ENCODE measurements at regions of chr1 and their contacts with region 1.

Region 1: DNA sequence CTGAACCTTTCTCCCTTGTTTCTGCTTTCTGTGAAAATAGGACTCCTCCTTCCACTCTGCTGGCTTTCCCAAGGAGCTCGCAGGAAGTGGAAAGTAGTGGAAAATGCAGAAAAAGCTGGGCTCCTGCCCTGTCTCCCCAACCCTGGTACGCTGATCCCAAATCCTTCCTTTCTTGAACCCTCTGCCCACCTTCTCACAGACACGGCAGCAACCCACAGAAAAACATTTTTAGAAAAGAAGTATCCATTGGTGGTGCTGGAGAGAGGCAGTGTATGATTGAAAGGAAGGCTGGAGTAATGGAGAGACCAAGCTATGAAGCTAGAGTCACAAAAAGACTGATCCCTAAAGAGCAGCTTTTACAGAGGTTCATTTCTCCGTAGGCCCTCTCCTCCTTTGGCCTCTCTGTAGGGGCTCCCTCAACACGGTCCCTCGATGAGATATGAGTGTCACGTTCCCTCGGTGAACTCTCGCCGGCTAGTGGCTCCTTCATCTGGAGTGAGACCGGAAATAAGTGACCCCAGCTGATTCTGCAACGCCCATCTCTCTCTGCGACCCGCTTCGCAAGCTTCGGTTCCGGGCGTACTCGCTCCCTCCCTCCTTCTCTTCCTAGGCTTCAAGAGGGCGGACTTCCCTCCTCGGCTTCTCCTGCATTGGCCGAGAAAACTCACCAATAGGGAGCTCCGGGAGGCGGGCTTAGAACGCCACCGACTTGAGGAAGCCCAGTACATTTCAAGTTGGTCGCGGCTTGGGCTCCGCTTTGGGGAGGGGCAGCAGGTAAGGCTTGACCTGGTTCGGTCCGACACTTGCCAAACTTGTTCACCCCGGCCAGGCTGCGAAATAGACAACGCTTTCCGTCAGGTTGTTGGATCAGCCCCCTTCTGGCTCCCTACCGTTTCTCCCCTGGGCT is at the starts of genes ANKRD34A and POLR3GL:
- DNase-seq: peak; percentile 88 to 97 (median 90)
- H3K4me3 ChIP-seq: peak within 1 kb of the TSS; percentile 65 to 94
- H3K4me3 Mint-ChIP-seq: peak within 1 kb of the TSS; percentile 89 to 95 (median 93)
- H3K27ac ChIP-seq: peak within 1 kb of the TSS; percentile 71
- H3K27ac Mint-ChIP-seq: peak within 1 kb of the TSS; percentile 89 to 99 (median 98)
- H3K4me1 ChIP-seq: peaks cover 62% of the 10 kb centered on the region
- H3K4me1 Mint-ChIP-seq: peaks cover 32 to 72% (median 45%) of the 10 kb centered on the region in 4 donors
- H3K27me3 ChIP-seq: no peaks in the 10 kb centered on the region
- H3K27me3 Mint-ChIP-seq: no peaks in the 10 kb centered on the region
- total RNA-seq, gene ANKRD34A: 1.8 to 2.1 TPM
- total RNA-seq, gene POLR3GL: 36.6 to 38.3 TPM

Region 2: GRCh38 chr1:145720877-145721671 is 243.2 kb before region 1 on chr1:
- CTCF ChIA-PET with region 1: no interaction called
- POLR2A ChIA-PET with region 1: no interaction called
- intact Hi-C with region 1: no loop called
- DNase-seq: peak; percentile 46 to 69 (median 55)
- H3K4me3 ChIP-seq: peak overlapping the region in 1 of 2 donors; percentile 21
- H3K4me3 Mint-ChIP-seq: peak overlapping the region; percentile 43 to 82 (median 66)
- H3K27ac ChIP-seq: no peak overlapping the region
- H3K27ac Mint-ChIP-seq: peak overlapping the region in 3 of 7 donors; percentile 18 to 65 (median 55)
- H3K4me1 ChIP-seq: peaks cover 8% of the 10 kb centered on the region
- H3K4me1 Mint-ChIP-seq: peaks cover 6 to 17% (median 14%) of the 10 kb centered on the region in 4 donors
- H3K27me3 ChIP-seq: no peaks in the 10 kb centered on the region
- H3K27me3 Mint-ChIP-seq: peaks cover 7 to 13% of the 10 kb centered on the region in 2 donors

Region 3: GRCh38 chr1:145823565-145824498 is 140.4 kb before region 1 on chr1 and contains the starts of genes POLR3C and RNF115:
- CTCF ChIA-PET with region 1: no interaction called
- POLR2A ChIA-PET with region 1: interaction called, 10 read pairs
- intact Hi-C with region 1: no loop called
- DNase-seq: peak; percentile 84 to 92 (median 86)
- H3K4me3 ChIP-seq: peak within 1 kb of the TSS; percentile 93 to 100
- H3K4me3 Mint-ChIP-seq: peak within 1 kb of the TSS; percentile 97 to 99 (median 98)
- H3K27ac ChIP-seq: peak within 1 kb of the TSS; percentile 78
- H3K27ac Mint-ChIP-seq: peak within 1 kb of the TSS; percentile 90 to 99 (median 97)
- H3K4me1 ChIP-seq: peaks cover 23% of the 10 kb centered on the region
- H3K4me1 Mint-ChIP-seq: peaks cover 17 to 35% (median 24%) of the 10 kb centered on the region in 4 donors
- H3K27me3 ChIP-seq: no peaks in the 10 kb centered on the region
- H3K27me3 Mint-ChIP-seq: no peaks in the 10 kb centered on the region
- total RNA-seq, gene POLR3C: 43.5 to 44.8 TPM
- total RNA-seq, gene RNF115: 15.2 to 15.3 TPM

Region 4: DNA sequence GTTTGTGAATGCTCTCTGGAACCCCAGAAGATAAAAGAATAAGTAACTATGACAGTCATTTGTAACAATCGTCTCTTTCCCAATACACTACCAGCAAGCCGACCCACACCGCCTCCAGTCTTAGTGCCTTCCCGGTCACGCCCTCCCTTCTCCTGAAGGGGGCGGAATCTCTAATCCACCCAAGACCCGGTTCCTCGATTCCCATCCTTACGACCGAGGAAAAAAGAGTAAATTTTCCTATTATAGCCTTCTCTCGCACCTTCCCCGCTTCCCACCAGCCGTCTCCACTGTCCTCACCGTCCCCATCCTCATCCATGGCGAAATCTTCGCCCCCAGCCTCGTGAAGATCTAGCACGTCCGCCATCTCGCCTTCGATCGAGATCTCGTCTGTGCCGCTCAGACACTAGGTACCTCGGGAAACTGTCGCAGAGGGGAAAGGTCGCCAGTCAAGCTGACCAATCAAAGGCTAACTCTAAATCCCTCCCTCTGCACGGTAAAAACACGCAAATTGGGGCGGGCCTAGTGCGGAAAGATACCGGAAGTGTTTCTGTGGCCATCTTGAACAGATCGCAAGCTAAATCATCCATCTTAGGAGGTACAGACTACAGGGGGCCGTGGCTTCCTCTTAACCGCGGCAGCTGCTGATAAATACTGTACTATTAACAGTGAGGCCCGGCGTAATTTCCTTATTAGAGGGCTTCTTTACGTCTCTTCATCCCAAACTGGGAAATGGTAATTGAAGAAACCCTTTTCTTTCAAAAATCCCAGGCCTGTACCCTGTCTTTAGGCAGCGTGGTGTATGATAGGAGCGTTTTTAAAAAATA is 37.0 kb before region 1 on chr1 and contains the start of gene RBM8A:
- CTCF ChIA-PET with region 1: interaction called, 30 read pairs
- POLR2A ChIA-PET with region 1: interaction called, 444 read pairs
- intact Hi-C with region 1: loop called (anchors 1 kb)
- DNase-seq: peak; percentile 94 to 98 (median 97)
- H3K4me3 ChIP-seq: peak within 1 kb of the TSS; percentile 96 to 99
- H3K4me3 Mint-ChIP-seq: peak within 1 kb of the TSS in 5 of 8 donors; percentile 20 to 69 (median 42)
- H3K27ac ChIP-seq: peak within 1 kb of the TSS; percentile 96
- H3K27ac Mint-ChIP-seq: peak within 1 kb of the TSS in 4 of 7 donors; percentile 72 to 94 (median 82)
- H3K4me1 ChIP-seq: peaks cover 29% of the 10 kb centered on the region
- H3K4me1 Mint-ChIP-seq: peaks cover 10 to 25% (median 17%) of the 10 kb centered on the region in 4 donors
- H3K27me3 ChIP-seq: no peaks in the 10 kb centered on the region
- H3K27me3 Mint-ChIP-seq: no peaks in the 10 kb centered on the region
- total RNA-seq, gene RBM8A: 116 to 122 TPM

Region 5: GRCh38 chr1:145996433-145997015 is 32.3 kb after region 1 on chr1 and contains the start of gene TXNIP:
- CTCF ChIA-PET with region 1: interaction called, 5 read pairs
- POLR2A ChIA-PET with region 1: interaction called, 370 read pairs
- intact Hi-C with region 1: loop called (anchors 5 kb)
- DNase-seq: peak; percentile 90 to 96 (median 94)
- H3K4me3 ChIP-seq: peak within 1 kb of the TSS; percentile 97 to 99
- H3K4me3 Mint-ChIP-seq: peak within 1 kb of the TSS; percentile 96 to 99 (median 98)
- H3K27ac ChIP-seq: peak within 1 kb of the TSS; percentile 75
- H3K27ac Mint-ChIP-seq: peak within 1 kb of the TSS; percentile 96 to 99 (median 97)
- H3K4me1 ChIP-seq: peaks cover 62% of the 10 kb centered on the region
- H3K4me1 Mint-ChIP-seq: peaks cover 39 to 89% (median 50%) of the 10 kb centered on the region in 4 donors
- H3K27me3 ChIP-seq: no peaks in the 10 kb centered on the region
- H3K27me3 Mint-ChIP-seq: no peaks in the 10 kb centered on the region
- total RNA-seq, gene TXNIP: 933 to 985 TPM

Region 6: DNA sequence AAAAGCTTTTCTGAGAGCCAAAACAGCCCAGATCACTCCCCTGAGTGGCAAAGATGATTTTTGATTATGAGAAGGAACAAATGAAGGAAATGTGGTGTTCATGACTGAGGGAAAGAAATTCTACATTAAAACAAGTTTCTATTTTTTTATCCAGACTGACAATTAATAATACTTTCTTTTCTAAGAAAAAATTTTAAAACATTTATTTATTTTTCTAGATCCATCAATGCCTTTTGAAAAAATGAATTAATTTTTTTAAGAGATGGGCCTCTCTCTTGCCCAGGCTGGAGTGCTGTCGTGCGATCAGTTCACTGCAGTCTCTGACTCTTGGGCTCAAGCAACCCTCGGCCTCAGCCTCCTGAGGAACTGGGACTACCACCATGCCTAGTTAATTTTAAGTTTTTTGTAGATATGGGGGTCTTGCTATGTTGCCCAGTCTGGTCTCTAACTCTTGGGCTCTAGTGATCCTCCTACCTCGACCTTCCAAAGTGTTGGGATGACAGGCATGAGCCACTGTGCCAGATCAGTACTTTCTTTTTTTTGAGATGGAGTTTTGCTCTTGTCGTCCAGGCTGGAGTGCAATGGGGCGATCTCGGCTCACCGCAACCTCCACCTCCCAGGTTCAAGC is 43.4 kb after region 1 on chr1:
- CTCF ChIA-PET with region 1: interaction called, 33 read pairs
- POLR2A ChIA-PET with region 1: interaction called, 14 read pairs
- intact Hi-C with region 1: loop called (anchors 1 kb)
- DNase-seq: no peak
- H3K4me3 ChIP-seq: no peak overlapping the region
- H3K4me3 Mint-ChIP-seq: peak overlapping the region in 6 of 8 donors; percentile 79 to 87 (median 84)
- H3K27ac ChIP-seq: no peak overlapping the region
- H3K27ac Mint-ChIP-seq: peak overlapping the region; percentile 45 to 95 (median 88)
- H3K4me1 ChIP-seq: peaks cover 47% of the 10 kb centered on the region
- H3K4me1 Mint-ChIP-seq: peaks cover 24 to 54% (median 33%) of the 10 kb centered on the region in 4 donors
- H3K27me3 ChIP-seq: no peaks in the 10 kb centered on the region
- H3K27me3 Mint-ChIP-seq: no peaks in the 10 kb centered on the region

Measured in CD4-positive, alpha-beta memory T cell (primary cell).